ENCODE measurements at regions of chrX and their contacts with region 1.

Region 1: GRCh38 chrX:31071262-31071661 is 579 bp downstream of the FTHL17 start:
- DNase-seq: no peak
- H3K4me3 ChIP-seq: no peak overlapping the region
- H3K27ac ChIP-seq: no peak overlapping the region
- H3K27me3 ChIP-seq: peaks cover 0 to 31% (median 3%) of the 10 kb centered on the region in 45 donors
- CTCF ChIP-seq: no peak

Region 2: GRCh38 chrX:31061091-31061490 is 10.2 kb before region 1 on chrX:
- intact Hi-C with region 1: loop called in 1 of 2 experiments (anchors 1 kb)
- DNase-seq: no peak
- H3K4me3 ChIP-seq: no peak overlapping the region
- H3K27ac ChIP-seq: no peak overlapping the region
- H3K27me3 ChIP-seq: peaks cover 0 to 69% (median 12%) of the 10 kb centered on the region in 45 donors
- CTCF ChIP-seq: no peak

Measured in dorsolateral prefrontal cortex (tissue), 120 donors.